Mammary epithelial cell (primary cell): ENCODE measurements at regions of chr14 and their contacts with region 1.

Region 1: DNA sequence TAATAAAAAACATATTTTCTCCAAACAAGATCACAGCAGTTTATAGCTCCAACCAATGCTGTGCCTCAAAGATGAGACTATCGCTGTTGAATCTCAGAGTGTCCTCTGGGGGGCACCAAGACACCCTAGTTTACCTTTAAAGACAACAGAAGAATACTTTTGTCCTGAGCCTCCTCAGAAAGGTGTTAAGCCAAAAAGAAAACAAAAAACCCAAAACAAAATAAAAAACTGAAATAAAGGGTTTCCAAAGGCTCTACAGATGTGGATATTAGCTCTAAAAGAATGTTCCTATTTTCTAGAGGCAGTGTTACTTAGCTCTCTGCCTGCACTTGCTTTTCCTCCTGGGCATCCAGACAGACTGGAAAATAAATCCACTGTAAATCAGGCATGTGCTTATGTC is 86.9 kb upstream of the TTC7B start:
- DNase-seq: peak; percentile 38
- H3K4me3 ChIP-seq: no peak overlapping the region
- H3K27ac ChIP-seq: no peak overlapping the region
- H3K4me1 ChIP-seq: no peaks in the 10 kb centered on the region
- H3K27me3 ChIP-seq: no peaks in the 10 kb centered on the region
- CTCF ChIP-seq: peak; percentile 76 to 86

Region 2: DNA sequence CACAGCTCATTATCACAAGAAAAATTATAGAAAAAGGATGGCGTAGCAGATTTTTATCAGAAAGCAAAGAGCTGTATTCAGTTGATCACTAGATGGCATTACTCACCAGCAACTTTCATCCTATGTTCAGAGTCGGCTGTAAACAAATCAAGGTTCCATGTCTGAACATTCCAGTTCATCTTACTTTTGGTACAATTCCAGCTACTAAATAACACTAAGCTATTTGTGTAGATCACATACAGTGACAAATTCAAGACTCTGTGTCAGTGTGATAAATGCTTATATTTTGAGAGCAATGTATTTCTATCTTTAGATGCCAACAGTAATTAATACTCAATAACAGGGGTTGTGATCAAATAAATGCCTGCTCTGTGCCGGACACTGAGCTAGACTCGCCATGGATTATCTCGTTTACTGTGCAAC is 601.4 kb before region 1 on chr14:
- CTCF ChIA-PET with region 1: no interaction called
- dilution Hi-C with region 1: no loop called
- in situ Hi-C with region 1: no loop called
- intact Hi-C with region 1: loop called (anchors 2 kb)
- DNase-seq: peak; percentile 25
- H3K4me3 ChIP-seq: no peak overlapping the region
- H3K27ac ChIP-seq: no peak overlapping the region
- H3K4me1 ChIP-seq: no peaks in the 10 kb centered on the region
- H3K27me3 ChIP-seq: no peaks in the 10 kb centered on the region
- CTCF ChIP-seq: peak; percentile 35 to 56

Region 3: GRCh38 chr14:90642244-90642717 is 260.8 kb before region 1 on chr14:
- CTCF ChIA-PET with region 1: no interaction called
- dilution Hi-C with region 1: no loop called
- in situ Hi-C with region 1: no loop called
- intact Hi-C with region 1: no loop called
- DNase-seq: no peak
- H3K4me3 ChIP-seq: no peak overlapping the region
- H3K27ac ChIP-seq: no peak overlapping the region
- H3K4me1 ChIP-seq: peaks cover 24% of the 10 kb centered on the region
- H3K27me3 ChIP-seq: no peaks in the 10 kb centered on the region
- CTCF ChIP-seq: no peak

Region 4: DNA sequence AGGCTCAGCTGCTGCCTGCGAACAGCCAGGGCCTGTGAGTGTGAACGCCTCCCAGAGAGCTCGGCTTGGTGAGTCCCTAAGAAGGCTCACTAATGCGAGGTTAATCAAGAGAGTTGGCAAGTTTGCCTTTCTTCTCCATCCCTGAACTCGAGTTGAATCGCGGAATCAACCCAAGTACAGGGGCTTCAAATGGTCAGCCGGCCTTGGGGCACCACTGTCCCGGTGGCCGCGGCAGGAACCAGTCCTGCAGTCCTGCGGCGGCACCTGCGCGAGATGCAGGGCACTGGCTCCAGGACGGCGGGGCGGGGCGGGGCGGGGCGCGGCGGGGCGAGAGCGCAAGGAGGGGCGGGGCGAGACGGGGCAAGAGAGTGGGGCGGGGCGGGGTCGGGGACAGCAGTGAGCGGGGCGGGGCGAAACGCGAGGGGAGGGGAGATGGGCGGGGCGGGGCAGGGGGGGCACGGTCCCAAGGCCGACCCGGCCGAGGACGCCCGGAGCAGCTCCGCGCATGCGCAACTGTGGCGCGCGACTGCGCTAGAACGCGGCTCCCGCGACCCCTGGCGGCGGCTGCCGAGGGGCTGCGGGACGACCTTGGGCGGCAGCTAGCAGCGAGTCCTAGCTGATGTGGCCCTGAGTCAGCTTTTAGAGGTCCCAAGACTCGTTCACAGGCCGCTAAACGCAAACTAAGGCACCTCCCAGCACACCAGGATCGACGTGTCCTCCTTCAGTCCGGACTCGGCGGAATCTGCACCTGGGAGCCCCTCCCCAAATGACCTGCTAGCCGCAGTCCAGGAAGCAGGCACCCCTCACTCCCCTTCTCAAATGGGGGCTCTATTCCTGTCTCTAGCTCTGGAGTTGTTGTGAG is 144.8 kb before region 1 on chr14:
- CTCF ChIA-PET with region 1: no interaction called
- dilution Hi-C with region 1: no loop called
- in situ Hi-C with region 1: no loop called
- intact Hi-C with region 1: loop called (anchors 1 kb)
- DNase-seq: peak; percentile 88
- H3K4me3 ChIP-seq: peak overlapping the region; percentile 44 to 53 (median 45)
- H3K27ac ChIP-seq: peak overlapping the region; percentile 55
- H3K4me1 ChIP-seq: peaks cover 7% of the 10 kb centered on the region
- H3K27me3 ChIP-seq: no peaks in the 10 kb centered on the region
- CTCF ChIP-seq: peak; percentile 57 to 90

Region 5: DNA sequence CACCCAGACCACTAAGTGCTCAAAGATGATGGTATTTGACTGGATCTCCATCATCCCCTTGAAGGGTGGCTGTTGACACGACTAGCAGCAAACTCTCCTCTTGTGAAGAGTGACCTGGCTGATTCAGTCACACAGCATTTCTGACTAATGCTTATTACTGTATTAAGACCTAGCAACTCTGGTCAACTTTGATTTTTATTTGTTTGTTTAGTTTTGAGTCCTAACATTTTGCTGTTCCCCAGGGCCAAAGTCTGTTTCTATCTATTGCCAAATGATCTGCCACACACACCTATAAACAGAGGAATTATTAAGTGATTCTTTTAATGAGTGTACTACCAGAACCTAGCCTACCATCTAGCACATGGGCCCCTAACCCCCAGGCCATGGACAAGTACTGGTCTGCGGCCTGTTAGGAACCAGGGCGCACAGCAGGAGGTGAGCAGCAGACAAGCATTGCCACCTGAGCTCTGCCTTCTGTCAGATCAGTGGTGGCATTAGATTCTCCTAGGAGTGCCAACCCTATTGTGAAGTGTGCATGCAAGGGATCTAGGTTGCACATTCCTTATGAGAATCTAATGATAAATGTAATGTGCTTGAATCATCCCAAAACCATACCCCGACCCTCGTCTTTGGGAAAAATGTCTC is 37.3 kb after region 1 on chr14:
- CTCF ChIA-PET with region 1: no interaction called
- dilution Hi-C with region 1: no loop called
- in situ Hi-C with region 1: no loop called
- intact Hi-C with region 1: no loop called
- DNase-seq: no peak
- H3K4me3 ChIP-seq: no peak overlapping the region
- H3K27ac ChIP-seq: no peak overlapping the region
- H3K4me1 ChIP-seq: no peaks in the 10 kb centered on the region
- H3K27me3 ChIP-seq: no peaks in the 10 kb centered on the region
- CTCF ChIP-seq: no peak

Region 6: DNA sequence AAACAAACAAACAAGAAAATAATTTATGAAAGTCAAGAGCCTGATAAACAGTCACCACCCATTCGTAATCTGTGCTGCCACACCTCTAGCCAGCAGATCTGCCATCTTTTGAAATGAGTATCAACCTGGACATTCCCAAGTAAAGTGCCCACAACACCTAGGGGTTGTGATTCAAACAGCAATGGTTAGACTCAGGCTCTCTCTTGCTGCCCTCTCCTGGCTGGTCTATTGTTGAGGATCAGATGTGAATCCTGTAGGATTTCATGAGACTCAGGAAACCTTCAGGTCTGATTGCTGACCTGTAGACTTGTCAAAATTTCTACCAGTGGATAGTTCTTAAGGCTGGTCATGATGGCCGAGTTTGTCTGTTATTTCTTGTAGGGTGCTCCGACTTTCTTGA is 237.6 kb after region 1 on chr14:
- CTCF ChIA-PET with region 1: interaction called, 3 read pairs
- dilution Hi-C with region 1: loop called (anchors 5 kb)
- in situ Hi-C with region 1: loop called (anchors 10 kb)
- intact Hi-C with region 1: loop called (anchors 1 kb)
- DNase-seq: peak; percentile 59
- H3K4me3 ChIP-seq: no peak overlapping the region
- H3K27ac ChIP-seq: no peak overlapping the region
- H3K4me1 ChIP-seq: peaks cover 7% of the 10 kb centered on the region
- H3K27me3 ChIP-seq: no peaks in the 10 kb centered on the region
- CTCF ChIP-seq: peak; percentile 71 to 81

Region 7: GRCh38 chr14:91177073-91178034 is 274.3 kb after region 1 on chr14:
- CTCF ChIA-PET with region 1: interaction called, 18 read pairs
- dilution Hi-C with region 1: no loop called
- in situ Hi-C with region 1: loop called (anchors 5 kb)
- intact Hi-C with region 1: loop called (anchors 1 kb)
- DNase-seq: peak; percentile 55
- H3K4me3 ChIP-seq: no peak overlapping the region
- H3K27ac ChIP-seq: no peak overlapping the region
- H3K4me1 ChIP-seq: no peaks in the 10 kb centered on the region
- H3K27me3 ChIP-seq: no peaks in the 10 kb centered on the region
- CTCF ChIP-seq: peak; percentile 75 to 89

Region 8: DNA sequence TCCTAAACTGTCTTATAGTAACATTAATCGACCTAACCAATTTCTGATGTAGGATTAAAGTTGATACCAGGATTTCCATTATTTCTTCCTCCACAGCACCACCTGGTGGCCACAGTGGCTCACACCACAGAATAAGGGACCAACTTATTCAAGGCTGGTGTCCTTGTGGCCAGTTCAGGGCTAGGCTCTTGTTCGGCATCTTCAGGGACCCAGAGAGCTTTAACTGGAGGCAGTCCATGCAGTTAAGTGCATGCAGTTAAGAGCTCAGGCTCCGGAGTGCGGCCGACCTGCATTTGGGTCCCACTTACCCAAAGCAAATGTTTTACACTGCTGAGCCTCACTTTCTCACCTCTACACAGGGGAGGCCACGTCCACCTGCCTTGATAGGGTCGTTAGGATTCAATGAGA is 383.4 kb after region 1 on chr14:
- CTCF ChIA-PET with region 1: no interaction called
- dilution Hi-C with region 1: no loop called
- in situ Hi-C with region 1: loop called in 1 of 2 experiments (anchors 25 kb)
- intact Hi-C with region 1: loop called (anchors 1 kb)
- DNase-seq: peak; percentile 64
- H3K4me3 ChIP-seq: no peak overlapping the region
- H3K27ac ChIP-seq: no peak overlapping the region
- H3K4me1 ChIP-seq: peaks cover 23% of the 10 kb centered on the region
- H3K27me3 ChIP-seq: no peaks in the 10 kb centered on the region
- CTCF ChIP-seq: peak; percentile 83 to 94